K562 (cell line): ENCODE measurements at regions of chr1 and their contacts with region 1.

Region 1: GRCh38 chr1:32179443-32180185 is at the start of gene TXLNA:
- DNase-seq: peak; percentile 98 to 99 (median 99)
- ATAC-seq: peak; percentile 95
- H3K4me3 ChIP-seq: peak within 1 kb of the TSS; percentile 77
- H3K27ac ChIP-seq: peak within 1 kb of the TSS; percentile 89
- H3K4me1 ChIP-seq: peaks cover 25 to 30% of the 10 kb centered on the region in 2 experiments
- H3K27me3 ChIP-seq: no peaks in the 10 kb centered on the region
- CTCF ChIP-seq: peak in 1 of 3 experiments; percentile 4; a peak in 1 of 6 replicates
- EP300 ChIP-seq: no peak
- POLR2A ChIP-seq: peak; percentile 96
- RAD21 ChIP-seq: no peak
- polyA plus RNA-seq, gene TXLNA: 9.2 to 15.2 TPM

Region 2: GRCh38 chr1:32013386-32014198 is 166.0 kb before region 1 on chr1 and contains the start of gene KHDRBS1:
- CTCF ChIA-PET with region 1: no interaction called
- POLR2A ChIA-PET with region 1: no interaction called
- in situ Hi-C with region 1: no loop called
- intact Hi-C with region 1: loop called (anchors 10 kb)
- DNase-seq: peak; percentile 100
- ATAC-seq: peak; percentile 83
- H3K4me3 ChIP-seq: peak within 1 kb of the TSS; percentile 82
- H3K27ac ChIP-seq: peak within 1 kb of the TSS; percentile 95
- H3K4me1 ChIP-seq: peaks cover 24 to 42% of the 10 kb centered on the region in 2 experiments; a peak in 4 of 5 replicates
- H3K27me3 ChIP-seq: no peaks in the 10 kb centered on the region
- CTCF ChIP-seq: no peak
- EP300 ChIP-seq: no peak; the same call in 1 of the 2 replicates
- POLR2A ChIP-seq: peak; percentile 93
- RAD21 ChIP-seq: no peak; a peak in 1 of 4 replicates
- polyA plus RNA-seq, gene KHDRBS1: 48.4 to 53.2 TPM

Region 3: GRCh38 chr1:32072622-32073298 is 106.9 kb before region 1 on chr1 and contains the start of gene TMEM39B:
- CTCF ChIA-PET with region 1: no interaction called
- POLR2A ChIA-PET with region 1: interaction called, 3 read pairs
- in situ Hi-C with region 1: no loop called
- intact Hi-C with region 1: loop called (anchors 2 kb)
- DNase-seq: peak; percentile 98 to 99 (median 99)
- ATAC-seq: peak; percentile 93
- H3K4me3 ChIP-seq: peak within 1 kb of the TSS; percentile 83
- H3K27ac ChIP-seq: peak within 1 kb of the TSS; percentile 79
- H3K4me1 ChIP-seq: peaks cover 17 to 20% of the 10 kb centered on the region in 2 experiments
- H3K27me3 ChIP-seq: no peaks in the 10 kb centered on the region
- CTCF ChIP-seq: 0 out of 6 replicates have a peak, but pooled peaks of 2 of the 3 experiments have one; percentile 1 to 9
- EP300 ChIP-seq: no peak; the same call in 1 of the 2 replicates
- POLR2A ChIP-seq: peak; percentile 98
- RAD21 ChIP-seq: no peak; a peak in 1 of 4 replicates
- polyA plus RNA-seq, gene TMEM39B: 0.92 to 3.5 TPM

Region 4: GRCh38 chr1:32107742-32108661 is 71.6 kb before region 1 on chr1 and contains the start of gene KPNA6:
- CTCF ChIA-PET with region 1: no interaction called
- POLR2A ChIA-PET with region 1: interaction called, 16 read pairs
- in situ Hi-C with region 1: no loop called
- intact Hi-C with region 1: loop called (anchors 5 kb)
- DNase-seq: peak; percentile 81 to 98 (median 82)
- ATAC-seq: peak; percentile 80
- H3K4me3 ChIP-seq: peak within 1 kb of the TSS; percentile 72
- H3K27ac ChIP-seq: peak within 1 kb of the TSS; percentile 83
- H3K4me1 ChIP-seq: peaks cover 28 to 33% of the 10 kb centered on the region in 2 experiments; a peak in 4 of 5 replicates
- H3K27me3 ChIP-seq: no peaks in the 10 kb centered on the region
- CTCF ChIP-seq: no peak
- EP300 ChIP-seq: peak; percentile 44; the same call in 1 of the 2 replicates
- POLR2A ChIP-seq: peak; percentile 84
- RAD21 ChIP-seq: no peak
- polyA plus RNA-seq, gene KPNA6: 24.8 to 32.2 TPM

Region 5: GRCh38 chr1:32127409-32128198 is 52.0 kb before region 1 on chr1:
- CTCF ChIA-PET with region 1: interaction called, 3 read pairs
- POLR2A ChIA-PET with region 1: interaction called, 3 read pairs
- in situ Hi-C with region 1: no loop called
- intact Hi-C with region 1: loop called (anchors 5 kb)
- DNase-seq: peak; percentile 44 to 73 (median 50)
- ATAC-seq: peak; percentile 52
- H3K4me3 ChIP-seq: no peak overlapping the region
- H3K27ac ChIP-seq: peak overlapping the region; percentile 74
- H3K4me1 ChIP-seq: peaks cover 42 to 61% of the 10 kb centered on the region in 2 experiments
- H3K27me3 ChIP-seq: no peaks in the 10 kb centered on the region
- CTCF ChIP-seq: peak in 2 of 3 experiments; percentile 29 to 33; a peak in 2 of 6 replicates
- EP300 ChIP-seq: peak; percentile 92
- POLR2A ChIP-seq: no peak
- RAD21 ChIP-seq: no peak

Region 6: GRCh38 chr1:32200226-32201010 is 20.8 kb after region 1 on chr1 and contains the start of gene CCDC28B:
- CTCF ChIA-PET with region 1: no interaction called
- POLR2A ChIA-PET with region 1: interaction called, 201 read pairs
- in situ Hi-C with region 1: no loop called
- intact Hi-C with region 1: no loop called
- DNase-seq: peak; percentile 68 to 82 (median 74)
- ATAC-seq: peak; percentile 65
- H3K4me3 ChIP-seq: peak within 1 kb of the TSS; percentile 49
- H3K27ac ChIP-seq: peak within 1 kb of the TSS; percentile 75
- H3K4me1 ChIP-seq: peaks cover 20 to 46% of the 10 kb centered on the region in 2 experiments
- H3K27me3 ChIP-seq: no peaks in the 10 kb centered on the region
- CTCF ChIP-seq: no peak
- EP300 ChIP-seq: no peak
- POLR2A ChIP-seq: peak; percentile 38; the same call in 1 of the 2 replicates
- RAD21 ChIP-seq: no peak
- polyA plus RNA-seq, gene CCDC28B: 5.7 to 14.5 TPM